GM12878 (cell line): ENCODE measurements at regions of chr1 and their contacts with region 1.

Region 1: DNA sequence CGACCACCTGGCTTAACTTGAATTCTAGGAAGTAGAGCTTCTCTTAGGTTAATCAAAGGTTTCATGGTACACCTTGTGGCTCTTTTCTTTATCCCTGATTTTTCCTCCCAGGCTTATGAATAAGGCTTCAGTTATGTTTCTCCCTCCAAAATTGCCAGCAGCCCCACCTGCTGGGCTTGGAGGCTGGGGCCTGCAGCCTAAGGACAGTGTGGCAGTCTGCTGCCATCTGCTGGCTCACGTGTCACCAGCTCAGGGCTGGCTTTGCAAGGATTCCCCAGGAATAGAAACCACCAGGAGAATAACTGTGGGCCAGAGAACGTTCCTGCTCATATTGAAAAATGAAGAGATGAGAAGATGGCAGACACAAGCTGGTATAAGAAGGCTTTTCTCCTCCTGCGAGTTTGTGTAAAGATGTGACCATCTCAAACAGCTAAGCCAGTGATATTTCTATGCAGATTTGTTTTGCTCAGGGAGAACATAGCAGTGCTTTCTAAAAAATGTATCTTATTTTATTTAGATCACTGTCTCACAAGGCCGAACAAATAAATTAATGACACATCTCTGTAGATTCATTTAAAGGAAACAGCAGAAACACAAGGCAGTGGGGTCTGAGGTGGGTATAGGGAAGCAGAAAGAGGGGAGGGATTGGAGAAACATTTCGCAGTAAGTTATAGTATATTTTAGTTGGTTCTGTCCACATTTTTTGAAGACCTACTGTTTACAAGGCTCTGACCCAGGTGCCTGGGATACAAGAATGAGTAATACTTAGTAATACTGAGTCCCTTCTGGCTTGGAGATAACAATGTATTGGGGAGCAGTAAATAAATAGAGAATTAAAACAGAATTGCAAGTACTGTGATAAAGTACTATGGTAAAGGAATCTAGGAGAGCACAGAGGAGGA is 291.1 kb upstream of the SGIP1 start:
- DNase-seq: no peak
- ATAC-seq: peak; percentile 86
- H3K4me3 ChIP-seq: no peak overlapping the region
- H3K27ac ChIP-seq: no peak overlapping the region
- H3K4me1 ChIP-seq: peaks cover 7% of the 10 kb centered on the region
- H3K27me3 ChIP-seq: 0 out of 4 replicates have a peak, but pooled peaks cover 0 to 1% of the 10 kb centered on the region in 2 experiments
- CTCF ChIP-seq: peak; percentile 99 to 100 (median 99); a peak in 5 of 6 replicates
- EP300 ChIP-seq: no peak
- POLR2A ChIP-seq: no peak
- RAD21 ChIP-seq: peak; percentile 97

Region 2: DNA sequence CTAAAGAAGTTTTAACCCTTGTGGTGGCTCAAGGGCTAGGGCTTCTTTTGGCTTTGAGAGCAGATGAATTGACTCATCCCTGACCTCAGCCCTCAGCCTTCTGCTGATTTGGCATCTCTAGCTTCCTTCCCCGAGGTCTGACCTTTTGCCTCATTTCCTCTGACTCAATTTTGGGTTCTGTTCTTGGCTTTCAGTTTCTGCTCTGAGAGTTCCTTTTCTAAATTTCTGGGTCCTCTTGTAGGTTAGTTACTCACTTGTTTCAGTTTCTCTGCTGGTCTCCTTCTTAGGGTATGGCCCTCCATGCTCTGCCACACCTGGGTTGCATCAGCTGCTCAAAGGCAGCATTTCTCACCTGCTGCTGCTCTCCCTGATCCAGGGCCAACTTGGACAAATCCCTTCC is 430.8 kb before region 1 on chr1:
- CTCF ChIA-PET with region 1: no interaction called
- POLR2A ChIA-PET with region 1: no interaction called
- RAD21 ChIA-PET with region 1: no interaction called
- SMC1A ChIA-PET with region 1: no interaction called
- in situ Hi-C with region 1: no loop called
- intact Hi-C with region 1: loop called (anchors 10 kb)
- DNase-seq: peak; percentile 96
- ATAC-seq: peak; percentile 100
- H3K4me3 ChIP-seq: no peak overlapping the region
- H3K27ac ChIP-seq: no peak overlapping the region; the same call in 1 of the 2 replicates
- H3K4me1 ChIP-seq: peaks cover 8% of the 10 kb centered on the region
- H3K27me3 ChIP-seq: no peaks in the 10 kb centered on the region
- CTCF ChIP-seq: no peak
- EP300 ChIP-seq: peak in 1 of 2 experiments; percentile 26; a peak in 1 of 4 replicates
- POLR2A ChIP-seq: no peak
- RAD21 ChIP-seq: peak; percentile 11; the same call in 1 of the 2 replicates

Region 3: DNA sequence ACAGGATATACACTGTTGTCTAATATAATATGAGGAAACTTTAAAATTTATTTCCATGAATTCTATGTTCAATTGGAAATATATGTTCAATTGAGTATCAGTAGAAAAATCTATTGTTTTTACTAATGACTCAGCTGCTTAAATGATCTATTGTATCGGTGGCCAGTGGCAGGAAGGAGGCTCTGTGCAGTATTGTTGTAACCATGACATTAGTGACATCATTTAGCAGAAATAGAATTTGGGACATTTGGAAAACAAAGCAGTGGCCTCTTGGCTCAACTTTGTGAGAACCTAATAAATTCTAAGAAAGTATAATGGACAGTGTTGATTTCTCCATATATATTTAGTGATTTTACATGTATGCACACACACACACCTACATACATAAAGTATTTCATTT is 192.8 kb before region 1 on chr1:
- CTCF ChIA-PET with region 1: no interaction called
- POLR2A ChIA-PET with region 1: no interaction called
- RAD21 ChIA-PET with region 1: no interaction called
- SMC1A ChIA-PET with region 1: no interaction called
- in situ Hi-C with region 1: no loop called
- intact Hi-C with region 1: no loop called
- DNase-seq: no peak
- ATAC-seq: no peak
- H3K4me3 ChIP-seq: no peak overlapping the region
- H3K27ac ChIP-seq: no peak overlapping the region
- H3K4me1 ChIP-seq: no peaks in the 10 kb centered on the region
- H3K27me3 ChIP-seq: no peaks in the 10 kb centered on the region
- CTCF ChIP-seq: no peak
- EP300 ChIP-seq: no peak
- POLR2A ChIP-seq: no peak
- RAD21 ChIP-seq: no peak

Region 4: DNA sequence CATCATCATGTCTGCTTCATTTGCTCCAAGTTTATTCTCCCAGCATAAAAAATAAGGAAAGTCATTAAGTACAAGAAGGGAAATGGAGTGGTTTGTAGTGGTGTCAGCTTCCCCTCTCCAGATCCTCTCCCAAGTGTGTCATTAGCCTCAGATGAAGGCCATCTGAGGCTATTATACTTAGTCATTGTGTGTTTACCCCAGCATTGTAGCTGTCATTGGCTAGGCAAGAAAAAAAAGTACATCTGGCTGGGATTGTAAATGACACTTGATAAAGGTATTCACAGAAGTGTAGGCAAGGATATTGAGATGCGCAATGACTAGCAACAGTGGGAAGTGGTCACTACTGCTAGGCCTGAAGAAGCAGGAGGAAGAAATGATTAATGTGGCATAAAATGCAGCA is 25.9 kb before region 1 on chr1:
- CTCF ChIA-PET with region 1: interaction called, 10 read pairs
- POLR2A ChIA-PET with region 1: no interaction called
- RAD21 ChIA-PET with region 1: no interaction called
- SMC1A ChIA-PET with region 1: no interaction called
- in situ Hi-C with region 1: no loop called
- intact Hi-C with region 1: no loop called
- DNase-seq: no peak
- ATAC-seq: no peak
- H3K4me3 ChIP-seq: no peak overlapping the region
- H3K27ac ChIP-seq: no peak overlapping the region
- H3K4me1 ChIP-seq: no peaks in the 10 kb centered on the region
- H3K27me3 ChIP-seq: no peaks in the 10 kb centered on the region
- CTCF ChIP-seq: no peak
- EP300 ChIP-seq: no peak
- POLR2A ChIP-seq: no peak
- RAD21 ChIP-seq: no peak

Region 5: GRCh38 chr1:66262211-66262963 is 19.5 kb after region 1 on chr1:
- CTCF ChIA-PET with region 1: interaction called, 105 read pairs
- POLR2A ChIA-PET with region 1: no interaction called
- RAD21 ChIA-PET with region 1: interaction called, 6 read pairs
- SMC1A ChIA-PET with region 1: interaction called, 20 read pairs
- in situ Hi-C with region 1: no loop called
- intact Hi-C with region 1: no loop called
- DNase-seq: no peak
- ATAC-seq: no peak
- H3K4me3 ChIP-seq: no peak overlapping the region
- H3K27ac ChIP-seq: no peak overlapping the region
- H3K4me1 ChIP-seq: peaks cover 4% of the 10 kb centered on the region; the same call in 1 of the 2 replicates
- H3K27me3 ChIP-seq: no peaks in the 10 kb centered on the region
- CTCF ChIP-seq: no peak
- EP300 ChIP-seq: no peak
- POLR2A ChIP-seq: no peak
- RAD21 ChIP-seq: no peak

Region 6: DNA sequence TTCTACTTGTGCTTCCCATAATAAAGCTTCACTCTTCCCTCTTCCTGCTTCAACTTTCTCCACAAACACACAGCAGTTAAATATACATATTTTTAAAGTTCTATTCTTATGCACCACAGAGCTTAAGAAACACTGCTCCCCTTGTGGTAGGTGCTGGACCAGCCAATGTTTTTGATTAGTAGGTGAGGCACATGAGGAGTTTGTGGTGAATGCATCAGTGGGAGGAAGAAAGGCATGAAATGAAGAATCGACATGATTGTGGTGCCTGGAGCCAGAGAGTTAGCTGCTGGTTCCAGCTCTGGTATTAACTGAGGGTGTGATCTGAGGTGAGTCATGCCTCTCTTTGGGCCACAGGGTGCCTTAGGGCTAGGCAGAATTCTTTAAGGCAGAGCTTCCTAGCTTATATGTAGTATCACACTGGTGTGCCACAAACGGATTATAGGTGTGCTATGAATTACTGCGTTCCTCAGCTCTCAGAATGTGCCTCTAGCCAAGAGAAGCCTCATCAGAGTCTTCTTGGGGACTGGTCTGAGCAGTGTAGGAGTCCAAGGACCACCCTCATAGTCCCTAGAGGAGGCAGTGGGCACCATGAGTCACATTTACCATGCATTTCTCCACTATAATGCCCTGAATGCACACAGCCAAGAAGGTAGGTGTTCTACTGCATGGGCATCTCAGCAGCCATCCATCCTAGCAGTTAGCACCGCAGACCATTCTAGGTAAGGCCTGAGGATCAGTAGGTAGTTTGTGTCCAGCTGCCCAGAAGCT is 193.7 kb after region 1 on chr1:
- CTCF ChIA-PET with region 1: interaction called, 595 read pairs
- POLR2A ChIA-PET with region 1: no interaction called
- RAD21 ChIA-PET with region 1: interaction called, 519 read pairs
- SMC1A ChIA-PET with region 1: interaction called, 663 read pairs
- in situ Hi-C with region 1: no loop called
- intact Hi-C with region 1: no loop called
- DNase-seq: peak; percentile 44
- ATAC-seq: peak; percentile 85
- H3K4me3 ChIP-seq: no peak overlapping the region
- H3K27ac ChIP-seq: peak overlapping the region; percentile 7; the same call in 1 of the 2 replicates
- H3K4me1 ChIP-seq: peaks cover 31% of the 10 kb centered on the region
- H3K27me3 ChIP-seq: no peaks in the 10 kb centered on the region
- CTCF ChIP-seq: peak; percentile 27 to 56 (median 50); a peak in 5 of 6 replicates
- EP300 ChIP-seq: no peak
- POLR2A ChIP-seq: no peak
- RAD21 ChIP-seq: peak; percentile 58